Activated B cell treated with CpG ODN at 0.5 μM for 24 hours (primary cell): ENCODE measurements at regions of chr1 and their contacts with region 1.

Region 1: GRCh38 chr1:8026153-8026975 is at the start of gene ERRFI1:
- DNase-seq: peak; percentile 92
- ATAC-seq: peak; percentile 91
- H3K4me3 Mint-ChIP-seq: peak within 1 kb of the TSS; percentile 86
- H3K27ac Mint-ChIP-seq: peak within 1 kb of the TSS; percentile 21
- H3K4me1 Mint-ChIP-seq: peaks cover 12% of the 10 kb centered on the region
- H3K27me3 Mint-ChIP-seq: peaks cover 18% of the 10 kb centered on the region
- CTCF ChIP-seq: no peak
- total RNA-seq, gene ERRFI1: 1.3 and 1.4 TPM in 2 replicates

Region 2: GRCh38 chr1:7783826-7784491 is 242.4 kb before region 1 on chr1 and contains the start of gene PER3:
- CTCF ChIA-PET with region 1: no interaction called
- POLR2A ChIA-PET with region 1: no interaction called
- intact Hi-C with region 1: loop called (anchors 5 kb)
- DNase-seq: peak; percentile 95
- ATAC-seq: peak; percentile 92
- H3K4me3 Mint-ChIP-seq: peak within 1 kb of the TSS; percentile 80
- H3K27ac Mint-ChIP-seq: no peak within 1 kb of the TSS
- H3K4me1 Mint-ChIP-seq: peaks cover 26% of the 10 kb centered on the region
- H3K27me3 Mint-ChIP-seq: no peaks in the 10 kb centered on the region
- CTCF ChIP-seq: no peak
- total RNA-seq, gene PER3: 2.7 and 3.3 TPM in 2 replicates

Region 3: GRCh38 chr1:8165595-8166360 is 139.4 kb after region 1 on chr1:
- CTCF ChIA-PET with region 1: no interaction called
- POLR2A ChIA-PET with region 1: no interaction called
- intact Hi-C with region 1: no loop called
- DNase-seq: no peak
- ATAC-seq: no peak
- H3K4me3 Mint-ChIP-seq: no peak overlapping the region
- H3K27ac Mint-ChIP-seq: no peak overlapping the region
- H3K4me1 Mint-ChIP-seq: peaks cover 11% of the 10 kb centered on the region
- H3K27me3 Mint-ChIP-seq: peaks cover 4% of the 10 kb centered on the region
- CTCF ChIP-seq: no peak

Region 4: DNA sequence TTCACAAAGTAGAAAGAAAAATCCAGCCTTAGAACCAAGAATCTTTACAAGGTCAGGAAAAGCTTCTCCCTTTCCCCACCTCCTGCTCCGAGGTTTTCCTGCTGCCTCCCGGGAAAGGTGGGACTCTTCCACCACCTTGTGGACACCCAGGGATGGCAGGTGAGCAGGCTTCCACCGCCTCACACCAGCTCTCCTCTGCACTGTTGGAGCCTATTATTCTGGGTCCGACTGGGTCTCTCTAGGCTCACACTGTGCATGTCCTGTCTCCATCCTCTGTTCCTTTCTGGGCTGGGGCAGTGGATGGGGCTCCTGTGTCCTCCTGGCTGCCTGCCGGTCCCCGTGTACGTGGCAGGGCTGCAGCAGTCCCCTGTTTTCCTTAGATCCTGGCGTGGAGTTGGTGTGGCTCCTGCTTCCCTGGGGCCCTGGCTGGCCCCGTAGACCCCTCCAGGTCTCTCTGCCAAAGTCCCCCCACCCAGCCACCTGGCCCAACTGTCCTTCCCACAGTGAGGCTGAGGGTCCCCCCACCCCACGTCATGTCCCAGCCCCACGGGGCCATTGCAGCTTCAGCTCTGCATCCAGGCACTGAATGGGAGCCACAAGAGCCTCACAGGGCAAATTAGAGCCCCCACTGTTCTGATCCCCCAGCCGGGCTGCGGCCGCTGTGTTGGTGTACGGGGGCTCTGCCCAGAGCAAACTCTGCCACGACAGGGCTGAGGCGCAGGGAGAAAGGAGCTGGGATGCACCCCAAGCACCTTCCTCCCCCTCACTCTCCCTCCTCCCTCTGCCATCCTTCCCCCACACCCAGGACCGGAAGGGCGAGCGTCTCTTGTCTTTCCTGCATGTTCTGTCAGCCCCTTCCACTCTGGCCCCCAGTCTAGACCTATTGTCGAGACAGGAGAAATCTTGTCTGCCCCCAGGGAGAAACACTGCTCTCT is 288.2 kb after region 1 on chr1:
- CTCF ChIA-PET with region 1: no interaction called
- POLR2A ChIA-PET with region 1: interaction called, 3 read pairs
- intact Hi-C with region 1: loop called (anchors 1 kb)
- DNase-seq: no peak
- ATAC-seq: no peak
- H3K4me3 Mint-ChIP-seq: no peak overlapping the region
- H3K27ac Mint-ChIP-seq: no peak overlapping the region
- H3K4me1 Mint-ChIP-seq: peaks cover 14% of the 10 kb centered on the region
- H3K27me3 Mint-ChIP-seq: peaks cover 38% of the 10 kb centered on the region
- CTCF ChIP-seq: no peak

Region 5: DNA sequence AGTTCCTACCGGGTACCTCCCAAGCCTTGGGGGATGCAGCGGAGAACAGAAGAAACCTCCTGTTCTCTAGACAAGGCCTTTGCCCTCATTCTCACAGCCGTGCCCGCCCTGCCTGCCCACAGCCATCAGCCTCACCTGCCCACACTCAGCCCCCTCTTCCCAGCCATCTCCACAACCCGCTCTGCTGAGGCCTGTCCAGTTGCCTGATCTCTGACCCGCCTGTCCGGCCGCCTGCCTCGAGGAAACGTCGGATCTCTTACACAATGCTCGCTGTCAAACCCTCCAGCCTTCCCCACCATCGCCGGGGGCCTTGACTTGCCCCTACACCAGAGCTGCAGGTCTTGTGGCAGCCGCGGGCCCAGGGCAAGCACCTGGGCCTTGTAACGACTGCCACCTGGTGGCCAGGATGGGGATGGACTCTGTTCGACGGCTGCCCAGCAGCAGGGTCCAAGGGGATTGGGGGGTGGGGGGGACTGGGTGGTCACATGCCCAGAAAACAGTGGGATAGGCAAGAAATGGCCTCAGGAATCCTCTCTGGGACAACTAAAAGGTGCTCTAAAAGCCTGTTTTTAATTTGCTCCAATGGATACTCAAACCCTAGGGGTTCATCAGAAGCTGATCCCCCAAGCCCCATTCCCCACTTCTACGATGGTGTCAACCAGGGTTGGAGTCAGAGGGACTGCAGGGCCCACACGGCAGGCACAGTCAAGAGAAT is 322.6 kb after region 1 on chr1:
- CTCF ChIA-PET with region 1: interaction called, 9 read pairs
- POLR2A ChIA-PET with region 1: no interaction called
- intact Hi-C with region 1: loop called (anchors 1 kb)
- DNase-seq: peak; percentile 64
- ATAC-seq: peak; percentile 89
- H3K4me3 Mint-ChIP-seq: no peak overlapping the region
- H3K27ac Mint-ChIP-seq: no peak overlapping the region
- H3K4me1 Mint-ChIP-seq: peaks cover 4% of the 10 kb centered on the region
- H3K27me3 Mint-ChIP-seq: no peaks in the 10 kb centered on the region
- CTCF ChIP-seq: no peak

Region 6: DNA sequence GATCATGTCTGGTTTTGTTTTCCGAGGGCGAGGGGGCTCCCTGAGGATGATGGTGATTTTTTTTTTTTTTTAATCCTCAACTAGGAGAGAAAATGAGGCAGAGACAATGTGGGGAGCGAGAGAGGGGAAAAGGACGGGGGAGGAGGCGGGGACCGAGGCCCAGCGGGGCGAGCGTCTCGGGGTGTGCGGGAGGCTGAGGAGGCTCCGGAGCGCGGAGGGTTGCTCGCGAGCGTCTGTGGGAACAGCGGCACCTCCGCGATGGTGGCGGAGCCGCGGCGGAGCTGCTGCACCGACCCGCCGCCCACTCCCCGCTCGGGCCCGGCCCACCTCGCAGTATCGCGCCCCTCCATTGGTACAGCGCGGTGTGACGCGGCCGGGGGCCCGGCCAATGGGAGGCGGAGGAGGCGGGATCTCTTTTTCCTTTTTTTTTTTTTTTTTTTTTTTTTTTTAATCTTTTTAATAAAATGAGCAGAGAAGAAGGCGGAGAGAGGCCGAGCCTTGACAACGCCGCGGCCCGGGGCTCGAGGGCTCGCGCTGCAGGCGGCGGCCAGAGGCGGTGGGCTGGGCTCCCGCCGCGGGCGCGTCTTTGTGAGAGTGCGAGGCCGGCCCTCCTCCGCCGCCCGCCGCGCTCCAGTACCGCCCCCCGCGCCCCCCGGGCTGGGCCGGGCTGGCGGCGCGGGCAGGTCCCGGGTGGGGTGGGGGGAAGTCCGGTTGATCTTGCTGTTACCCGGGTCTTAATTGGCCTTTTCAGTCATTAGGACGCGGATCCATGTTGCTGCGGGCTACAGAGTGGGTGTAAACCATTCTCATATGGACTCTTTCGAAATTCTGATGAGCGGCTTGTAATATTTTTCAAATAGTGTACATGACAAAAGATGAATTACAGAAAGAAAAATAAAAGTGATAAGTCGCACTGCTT is 791.3 kb after region 1 on chr1 and contains the start of gene RERE:
- CTCF ChIA-PET with region 1: no interaction called
- POLR2A ChIA-PET with region 1: no interaction called
- intact Hi-C with region 1: loop called (anchors 1 kb)
- DNase-seq: peak; percentile 99
- ATAC-seq: peak; percentile 93
- H3K4me3 Mint-ChIP-seq: peak within 1 kb of the TSS; percentile 94
- H3K27ac Mint-ChIP-seq: peak within 1 kb of the TSS; percentile 96
- H3K4me1 Mint-ChIP-seq: peaks cover 42% of the 10 kb centered on the region
- H3K27me3 Mint-ChIP-seq: no peaks in the 10 kb centered on the region
- CTCF ChIP-seq: no peak
- total RNA-seq, gene RERE: 90.5 and 98.8 TPM in 2 replicates